A673 (cell line): ENCODE measurements at regions of chrX and their contacts with region 1.

Region 1: GRCh38 chrX:145190801-145191389 is 56.4 kb upstream of the SPANXN1 start:
- DNase-seq: peak; percentile 40
- H3K4me3 ChIP-seq: no peak overlapping the region
- H3K27ac ChIP-seq: no peak overlapping the region
- H3K4me1 ChIP-seq: no peaks in the 10 kb centered on the region
- H3K27me3 ChIP-seq: no peaks in the 10 kb centered on the region
- CTCF ChIP-seq: peak; percentile 58

Region 2: DNA sequence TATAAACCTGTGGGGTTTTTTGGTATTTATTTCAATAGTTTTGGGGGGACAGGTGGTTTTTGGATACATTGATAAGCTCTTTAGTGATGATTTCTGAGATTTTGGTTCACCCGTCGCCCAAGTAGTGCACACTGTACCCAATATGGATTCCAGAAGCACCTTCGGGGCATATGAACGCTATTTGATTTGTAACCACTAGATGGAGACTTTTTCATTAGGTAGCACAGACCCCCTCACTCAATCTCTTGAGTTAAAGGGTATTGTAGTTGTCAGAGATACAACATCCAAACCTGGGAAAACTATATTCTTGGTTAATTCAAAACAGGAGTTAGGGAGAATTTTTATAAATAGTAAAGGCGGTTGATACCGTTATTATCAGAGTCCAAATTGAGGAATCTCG is 1753.5 kb before region 1 on chrX:
- CTCF ChIA-PET with region 1: no interaction called
- POLR2A ChIA-PET with region 1: no interaction called
- intact Hi-C with region 1: loop called (anchors 10 kb)
- DNase-seq: peak; percentile 21
- H3K4me3 ChIP-seq: no peak overlapping the region
- H3K27ac ChIP-seq: no peak overlapping the region
- H3K4me1 ChIP-seq: no peaks in the 10 kb centered on the region
- H3K27me3 ChIP-seq: no peaks in the 10 kb centered on the region
- CTCF ChIP-seq: peak; percentile 49

Region 3: GRCh38 chrX:143669395-143669794 is 1521.5 kb before region 1 on chrX:
- CTCF ChIA-PET with region 1: no interaction called
- POLR2A ChIA-PET with region 1: no interaction called
- intact Hi-C with region 1: loop called (anchors 5 kb)
- DNase-seq: peak; percentile 13
- H3K4me3 ChIP-seq: no peak overlapping the region
- H3K27ac ChIP-seq: no peak overlapping the region
- H3K4me1 ChIP-seq: no peaks in the 10 kb centered on the region
- H3K27me3 ChIP-seq: peaks cover 3% of the 10 kb centered on the region
- CTCF ChIP-seq: peak; percentile 36; the same call in 1 of the 2 replicates

Region 4: DNA sequence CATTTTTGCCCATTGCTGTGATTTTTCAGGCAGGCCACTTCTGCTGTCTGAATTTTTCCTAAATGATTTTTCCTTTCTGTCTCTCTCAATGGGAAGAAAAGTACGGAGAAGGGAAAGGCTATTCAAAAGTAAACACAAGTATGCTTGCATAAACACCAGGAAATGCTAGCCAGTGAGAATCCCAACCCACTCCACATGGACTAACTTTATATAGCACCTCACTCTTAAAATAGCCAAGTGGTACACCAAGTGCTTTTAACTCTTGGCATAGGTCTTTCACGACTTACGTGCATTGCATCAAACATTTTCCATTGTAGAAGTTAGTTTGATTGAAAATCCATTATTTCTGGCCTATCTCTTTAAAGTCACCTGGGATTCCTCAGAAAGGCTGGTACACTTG is 122.4 kb before region 1 on chrX:
- CTCF ChIA-PET with region 1: no interaction called
- POLR2A ChIA-PET with region 1: no interaction called
- intact Hi-C with region 1: no loop called
- DNase-seq: no peak
- H3K4me3 ChIP-seq: no peak overlapping the region
- H3K27ac ChIP-seq: no peak overlapping the region
- H3K4me1 ChIP-seq: no peaks in the 10 kb centered on the region
- H3K27me3 ChIP-seq: no peaks in the 10 kb centered on the region
- CTCF ChIP-seq: no peak